ENCODE measurements at regions of chr20 and their contacts with region 1.

Region 1: GRCh38 chr20:34579191-34579978 is 20.9 kb downstream of the MAP1LC3A start:
- DNase-seq: peak; percentile 93
- ATAC-seq: peak; percentile 88
- H3K4me3 ChIP-seq: peak overlapping the region; percentile 30; the same call in 1 of the 2 replicates
- H3K27ac ChIP-seq: peak overlapping the region; percentile 59
- H3K4me1 ChIP-seq: peaks cover 37% of the 10 kb centered on the region
- H3K27me3 ChIP-seq: no peaks in the 10 kb centered on the region
- CTCF ChIP-seq: peak; percentile 96

Region 2: DNA sequence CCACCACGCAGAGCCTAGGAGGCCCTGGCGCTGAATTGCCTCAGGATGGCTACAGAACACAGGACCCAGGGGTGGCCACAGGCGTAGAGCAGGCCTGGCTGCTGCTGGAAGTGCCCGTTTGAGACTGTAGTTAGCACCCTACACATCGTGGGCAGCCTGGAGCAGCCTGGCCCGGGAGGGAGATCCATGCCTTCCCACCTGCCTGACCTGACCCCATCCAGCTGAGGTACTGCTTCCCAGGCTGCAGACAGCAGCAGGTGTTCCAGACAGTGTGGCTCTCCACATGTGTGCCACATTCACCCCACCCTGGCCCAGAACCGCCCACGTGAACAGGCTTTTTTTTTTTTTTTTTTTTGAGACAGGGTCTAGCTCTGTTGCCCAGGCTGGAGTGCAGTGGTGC is 41.7 kb before region 1 on chr20:
- CTCF ChIA-PET with region 1: interaction called, 11 read pairs
- POLR2A ChIA-PET with region 1: no interaction called
- intact Hi-C with region 1: no loop called
- DNase-seq: no peak
- ATAC-seq: no peak
- H3K4me3 ChIP-seq: no peak overlapping the region
- H3K27ac ChIP-seq: no peak overlapping the region
- H3K4me1 ChIP-seq: no peaks in the 10 kb centered on the region
- H3K27me3 ChIP-seq: no peaks in the 10 kb centered on the region
- CTCF ChIP-seq: no peak

Region 3: GRCh38 chr20:34676642-34677373 is 97.4 kb after region 1 on chr20 and contains the start of gene PIGU:
- CTCF ChIA-PET with region 1: no interaction called
- POLR2A ChIA-PET with region 1: no interaction called
- intact Hi-C with region 1: loop called (anchors 1 kb)
- DNase-seq: peak; percentile 98
- ATAC-seq: peak; percentile 95
- H3K4me3 ChIP-seq: peak within 1 kb of the TSS; percentile 83
- H3K27ac ChIP-seq: peak within 1 kb of the TSS; percentile 79
- H3K4me1 ChIP-seq: peaks cover 13% of the 10 kb centered on the region
- H3K27me3 ChIP-seq: no peaks in the 10 kb centered on the region
- CTCF ChIP-seq: no peak
- total RNA-seq, gene PIGU: 24.5 and 27.9 TPM in 2 replicates

Region 4: GRCh38 chr20:34704177-34705007 is 125.0 kb after region 1 on chr20 and contains the start of gene TP53INP2:
- CTCF ChIA-PET with region 1: interaction called, 10 read pairs
- POLR2A ChIA-PET with region 1: interaction called, 5 read pairs
- intact Hi-C with region 1: loop called (anchors 1 kb)
- DNase-seq: peak; percentile 63
- ATAC-seq: peak; percentile 30
- H3K4me3 ChIP-seq: peak within 1 kb of the TSS; percentile 85
- H3K27ac ChIP-seq: no peak within 1 kb of the TSS
- H3K4me1 ChIP-seq: peaks cover 20% of the 10 kb centered on the region
- H3K27me3 ChIP-seq: no peaks in the 10 kb centered on the region
- CTCF ChIP-seq: no peak
- total RNA-seq, gene TP53INP2: 2.1 and 3.3 TPM in 2 replicates

Region 5: GRCh38 chr20:34768096-34768495 is 188.7 kb after region 1 on chr20:
- CTCF ChIA-PET with region 1: interaction called, 37 read pairs
- POLR2A ChIA-PET with region 1: no interaction called
- intact Hi-C with region 1: loop called (anchors 1 kb)
- DNase-seq: peak; percentile 11
- ATAC-seq: peak; percentile 33; the same call in 1 of the 2 replicates
- H3K4me3 ChIP-seq: no peak overlapping the region
- H3K27ac ChIP-seq: no peak overlapping the region
- H3K4me1 ChIP-seq: 0 out of 2 replicates have a peak, but pooled peaks cover 5% of the 10 kb centered on the region
- H3K27me3 ChIP-seq: no peaks in the 10 kb centered on the region
- CTCF ChIP-seq: no peak

Measured in PC-3 (cell line).